ENCODE measurements at regions of chr2 and their contacts with region 1.

Region 1: DNA sequence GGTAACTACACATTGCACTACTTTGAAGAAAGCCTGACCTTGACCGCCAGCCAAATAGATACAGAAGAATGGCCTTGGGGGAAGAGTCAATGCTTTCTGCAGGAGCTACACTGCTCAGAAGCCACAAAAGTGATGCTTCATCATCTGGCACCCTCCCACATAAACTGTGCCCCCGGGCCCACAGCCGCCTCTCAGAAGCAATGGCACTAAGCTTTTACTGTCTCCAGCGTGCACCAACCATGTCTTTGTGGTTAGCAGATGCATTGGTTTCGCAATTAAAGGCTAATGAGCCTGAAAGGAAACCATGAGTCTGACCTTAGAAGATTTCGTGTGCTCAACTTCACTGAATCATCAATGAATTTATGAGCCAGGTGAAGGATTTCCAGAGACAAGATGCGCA is 209.4 kb upstream of the TRIB2 start:
- DNase-seq: peak; percentile 88
- ATAC-seq: peak; percentile 82
- H3K4me3 Mint-ChIP-seq: no peak overlapping the region
- H3K27ac Mint-ChIP-seq: peak overlapping the region; percentile 5
- H3K4me1 Mint-ChIP-seq: peaks cover 80% of the 10 kb centered on the region
- H3K27me3 Mint-ChIP-seq: no peaks in the 10 kb centered on the region

Region 2: GRCh38 chr2:12456293-12457151 is 50.8 kb before region 1 on chr2:
- CTCF ChIA-PET with region 1: interaction called, 3 read pairs
- POLR2A ChIA-PET with region 1: no interaction called
- intact Hi-C with region 1: loop called (anchors 5 kb)
- DNase-seq: peak; percentile 63
- ATAC-seq: peak; percentile 83
- H3K4me3 Mint-ChIP-seq: peak overlapping the region; percentile 56
- H3K27ac Mint-ChIP-seq: peak overlapping the region; percentile 81
- H3K4me1 Mint-ChIP-seq: peaks cover 31% of the 10 kb centered on the region
- H3K27me3 Mint-ChIP-seq: no peaks in the 10 kb centered on the region

Region 3: DNA sequence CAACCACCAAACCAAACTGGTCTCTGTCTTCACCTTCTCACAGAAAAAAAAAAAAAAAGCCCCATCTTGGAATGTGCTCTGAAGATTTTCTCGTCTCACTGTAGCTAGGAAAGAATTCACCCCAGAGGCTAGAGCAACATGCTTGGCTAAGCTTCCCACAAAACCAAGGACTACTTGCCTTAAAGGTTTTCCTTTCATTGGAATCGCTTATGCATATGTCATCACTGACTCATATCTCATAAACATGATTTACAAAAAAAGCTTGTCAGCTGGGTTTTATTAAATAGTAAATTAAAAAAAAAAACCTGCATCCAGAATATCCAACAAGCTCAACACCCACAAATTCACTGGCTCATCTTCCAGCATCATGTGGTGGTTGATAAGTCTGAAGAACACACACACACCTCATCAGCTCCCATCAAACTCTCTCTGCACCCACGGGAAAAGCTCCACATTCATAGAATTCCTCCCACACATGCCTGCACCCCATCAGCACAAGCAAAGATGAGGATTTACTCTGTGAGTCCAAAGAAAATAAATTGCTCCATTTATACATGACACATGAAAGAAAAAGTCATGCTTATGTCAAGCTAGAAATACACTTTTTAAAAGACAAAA is 27.5 kb after region 1 on chr2:
- CTCF ChIA-PET with region 1: no interaction called
- POLR2A ChIA-PET with region 1: no interaction called
- intact Hi-C with region 1: no loop called
- DNase-seq: no peak
- ATAC-seq: no peak
- H3K4me3 Mint-ChIP-seq: no peak overlapping the region
- H3K27ac Mint-ChIP-seq: no peak overlapping the region
- H3K4me1 Mint-ChIP-seq: peaks cover 19% of the 10 kb centered on the region
- H3K27me3 Mint-ChIP-seq: no peaks in the 10 kb centered on the region

Region 4: GRCh38 chr2:12555012-12555645 is 47.8 kb after region 1 on chr2:
- CTCF ChIA-PET with region 1: no interaction called
- POLR2A ChIA-PET with region 1: no interaction called
- intact Hi-C with region 1: loop called (anchors 2 to 5 kb)
- DNase-seq: peak; percentile 55
- ATAC-seq: peak; percentile 92
- H3K4me3 Mint-ChIP-seq: peak overlapping the region; percentile 33
- H3K27ac Mint-ChIP-seq: peak overlapping the region; percentile 75
- H3K4me1 Mint-ChIP-seq: peaks cover 36% of the 10 kb centered on the region
- H3K27me3 Mint-ChIP-seq: no peaks in the 10 kb centered on the region

Measured in activated CD4-positive, alpha-beta T cell treated with anti-CD3 and anti-CD28 coated beads for 36 hours (primary cell).